Activated B cell treated with CpG ODN at 0.5 μM for 24 hours (primary cell): ENCODE measurements at regions of chr10 and their contacts with region 1.

Region 1: GRCh38 chr10:61284222-61284890 is 168.8 kb downstream of the TMEM26 start:
- DNase-seq: no peak
- ATAC-seq: no peak
- H3K4me3 Mint-ChIP-seq: peak overlapping the region; percentile 41
- H3K27ac Mint-ChIP-seq: no peak overlapping the region
- H3K4me1 Mint-ChIP-seq: peaks cover 24% of the 10 kb centered on the region
- H3K27me3 Mint-ChIP-seq: peaks cover 7% of the 10 kb centered on the region
- CTCF ChIP-seq: peak; percentile 75

Region 2: GRCh38 chr10:60388709-60389301 is 895.6 kb before region 1 on chr10:
- CTCF ChIA-PET with region 1: no interaction called
- POLR2A ChIA-PET with region 1: no interaction called
- intact Hi-C with region 1: no loop called
- DNase-seq: no peak
- ATAC-seq: peak; percentile 25
- H3K4me3 Mint-ChIP-seq: peak overlapping the region; percentile 29
- H3K27ac Mint-ChIP-seq: peak overlapping the region; percentile 51
- H3K4me1 Mint-ChIP-seq: peaks cover 29% of the 10 kb centered on the region
- H3K27me3 Mint-ChIP-seq: no peaks in the 10 kb centered on the region
- CTCF ChIP-seq: no peak

Region 3: GRCh38 chr10:60444494-60445064 is 839.8 kb before region 1 on chr10:
- CTCF ChIA-PET with region 1: no interaction called
- POLR2A ChIA-PET with region 1: no interaction called
- intact Hi-C with region 1: loop called (anchors 5 kb)
- DNase-seq: no peak
- ATAC-seq: no peak
- H3K4me3 Mint-ChIP-seq: no peak overlapping the region
- H3K27ac Mint-ChIP-seq: no peak overlapping the region
- H3K4me1 Mint-ChIP-seq: peaks cover 8% of the 10 kb centered on the region
- H3K27me3 Mint-ChIP-seq: no peaks in the 10 kb centered on the region
- CTCF ChIP-seq: no peak

Region 4: GRCh38 chr10:60778214-60779029 is 505.9 kb before region 1 on chr10 and contains the start of gene CDK1:
- CTCF ChIA-PET with region 1: no interaction called
- POLR2A ChIA-PET with region 1: no interaction called
- intact Hi-C with region 1: loop called (anchors 2 kb)
- DNase-seq: peak; percentile 86
- ATAC-seq: peak; percentile 99
- H3K4me3 Mint-ChIP-seq: peak within 1 kb of the TSS; percentile 96
- H3K27ac Mint-ChIP-seq: peak within 1 kb of the TSS; percentile 84
- H3K4me1 Mint-ChIP-seq: peaks cover 17% of the 10 kb centered on the region
- H3K27me3 Mint-ChIP-seq: peaks cover 3% of the 10 kb centered on the region
- CTCF ChIP-seq: no peak
- total RNA-seq, gene CDK1: 1.5 and 1.9 TPM in 2 replicates

Region 5: GRCh38 chr10:60944159-60944909 is 340.0 kb before region 1 on chr10 and contains the start of gene RHOBTB1:
- CTCF ChIA-PET with region 1: no interaction called
- POLR2A ChIA-PET with region 1: no interaction called
- intact Hi-C with region 1: loop called (anchors 5 kb)
- DNase-seq: peak; percentile 27
- ATAC-seq: peak; percentile 60
- H3K4me3 Mint-ChIP-seq: peak within 1 kb of the TSS; percentile 85
- H3K27ac Mint-ChIP-seq: peak within 1 kb of the TSS; percentile 61
- H3K4me1 Mint-ChIP-seq: peaks cover 14% of the 10 kb centered on the region
- H3K27me3 Mint-ChIP-seq: peaks cover 23% of the 10 kb centered on the region
- CTCF ChIP-seq: no peak
- total RNA-seq, gene RHOBTB1: 0.24 and 0.51 TPM in 2 replicates

Region 6: GRCh38 chr10:61135276-61135721 is 149.1 kb before region 1 on chr10:
- CTCF ChIA-PET with region 1: interaction called, 8 read pairs
- POLR2A ChIA-PET with region 1: no interaction called
- intact Hi-C with region 1: loop called (anchors 1 kb)
- DNase-seq: peak; percentile 19
- ATAC-seq: peak; percentile 94
- H3K4me3 Mint-ChIP-seq: peak overlapping the region; percentile 68
- H3K27ac Mint-ChIP-seq: peak overlapping the region; percentile 91
- H3K4me1 Mint-ChIP-seq: peaks cover 43% of the 10 kb centered on the region
- H3K27me3 Mint-ChIP-seq: no peaks in the 10 kb centered on the region
- CTCF ChIP-seq: no peak

Region 7: DNA sequence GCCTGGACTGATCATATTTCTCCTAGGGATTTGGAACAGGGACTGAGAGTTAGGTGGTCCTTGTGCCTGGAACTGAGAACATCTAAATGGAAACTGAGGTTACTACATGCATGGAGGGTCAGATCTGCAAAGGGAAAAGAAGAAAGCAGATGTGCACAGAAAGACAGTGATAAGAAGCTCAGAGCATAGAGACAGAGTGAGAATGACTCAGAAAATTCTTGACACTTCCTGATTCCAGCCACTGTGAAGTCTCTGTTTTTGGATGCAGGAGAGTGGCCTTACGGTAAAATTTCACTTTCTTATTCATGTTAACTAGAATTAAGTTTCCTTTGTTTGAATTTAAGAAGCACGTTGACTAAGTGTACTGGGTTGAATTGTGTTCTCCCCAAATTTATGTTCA is 72.9 kb before region 1 on chr10:
- CTCF ChIA-PET with region 1: no interaction called
- POLR2A ChIA-PET with region 1: no interaction called
- intact Hi-C with region 1: no loop called
- DNase-seq: no peak
- ATAC-seq: no peak
- H3K4me3 Mint-ChIP-seq: no peak overlapping the region
- H3K27ac Mint-ChIP-seq: no peak overlapping the region
- H3K4me1 Mint-ChIP-seq: no peaks in the 10 kb centered on the region
- H3K27me3 Mint-ChIP-seq: peaks cover 8% of the 10 kb centered on the region
- CTCF ChIP-seq: no peak

Region 8: DNA sequence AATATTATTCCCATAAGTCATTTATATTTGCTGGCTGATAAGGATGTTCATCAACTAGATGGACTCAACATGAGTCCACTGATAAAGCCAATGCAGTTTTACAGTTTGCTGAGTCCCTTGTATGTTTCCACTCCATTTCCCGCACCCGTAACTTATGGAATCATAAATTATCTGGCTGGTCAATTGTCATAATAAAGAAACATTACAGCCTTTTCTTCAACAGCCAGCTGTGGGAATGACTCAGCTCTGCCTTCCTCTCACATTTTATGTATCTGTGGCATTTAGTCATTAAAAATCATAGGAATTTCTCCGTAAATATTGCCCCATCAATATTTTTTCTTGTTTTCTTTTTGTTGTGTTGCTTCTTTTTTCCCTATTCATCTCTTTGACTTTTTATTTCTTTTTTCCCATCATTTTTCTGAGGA is 191.1 kb after region 1 on chr10:
- CTCF ChIA-PET with region 1: no interaction called
- POLR2A ChIA-PET with region 1: no interaction called
- intact Hi-C with region 1: no loop called
- DNase-seq: no peak
- ATAC-seq: no peak
- H3K4me3 Mint-ChIP-seq: no peak overlapping the region
- H3K27ac Mint-ChIP-seq: no peak overlapping the region
- H3K4me1 Mint-ChIP-seq: no peaks in the 10 kb centered on the region
- H3K27me3 Mint-ChIP-seq: peaks cover 4% of the 10 kb centered on the region
- CTCF ChIP-seq: no peak

Region 9: DNA sequence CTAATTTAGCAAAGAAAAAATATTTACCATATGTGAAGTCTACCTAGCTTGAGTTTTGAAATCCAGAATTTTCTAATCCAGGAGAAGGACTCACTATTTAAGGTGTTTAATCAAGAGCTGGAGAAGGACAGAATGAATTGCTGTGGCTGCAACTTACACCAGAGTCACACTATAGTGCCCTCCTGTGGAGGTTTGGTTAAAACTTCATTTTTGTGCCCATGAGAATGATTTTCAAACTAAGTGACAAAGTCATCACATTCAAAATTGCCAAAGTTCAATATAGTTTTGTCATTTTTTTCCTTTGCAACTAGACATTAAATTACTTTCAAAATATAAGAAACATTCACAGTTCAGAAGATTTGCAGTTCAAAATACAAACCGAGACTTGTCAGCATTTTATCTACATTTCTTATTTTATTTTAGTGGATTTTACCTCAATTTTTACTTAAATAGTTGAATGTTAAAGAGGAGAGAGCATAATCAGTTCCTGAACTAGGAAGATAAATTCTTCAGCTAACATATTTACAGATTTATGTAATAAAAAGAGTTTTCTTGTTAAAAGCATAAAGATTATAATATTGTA is 449.1 kb after region 1 on chr10:
- CTCF ChIA-PET with region 1: no interaction called
- POLR2A ChIA-PET with region 1: no interaction called
- intact Hi-C with region 1: loop called (anchors 10 kb)
- DNase-seq: no peak
- ATAC-seq: no peak
- H3K4me3 Mint-ChIP-seq: no peak overlapping the region
- H3K27ac Mint-ChIP-seq: no peak overlapping the region
- H3K4me1 Mint-ChIP-seq: no peaks in the 10 kb centered on the region
- H3K27me3 Mint-ChIP-seq: peaks cover 27% of the 10 kb centered on the region
- CTCF ChIP-seq: no peak